Right ventricle myocardium inferior (tissue), 1 donor: ENCODE measurements at regions of chr10 and their contacts with region 1.

Region 1: DNA sequence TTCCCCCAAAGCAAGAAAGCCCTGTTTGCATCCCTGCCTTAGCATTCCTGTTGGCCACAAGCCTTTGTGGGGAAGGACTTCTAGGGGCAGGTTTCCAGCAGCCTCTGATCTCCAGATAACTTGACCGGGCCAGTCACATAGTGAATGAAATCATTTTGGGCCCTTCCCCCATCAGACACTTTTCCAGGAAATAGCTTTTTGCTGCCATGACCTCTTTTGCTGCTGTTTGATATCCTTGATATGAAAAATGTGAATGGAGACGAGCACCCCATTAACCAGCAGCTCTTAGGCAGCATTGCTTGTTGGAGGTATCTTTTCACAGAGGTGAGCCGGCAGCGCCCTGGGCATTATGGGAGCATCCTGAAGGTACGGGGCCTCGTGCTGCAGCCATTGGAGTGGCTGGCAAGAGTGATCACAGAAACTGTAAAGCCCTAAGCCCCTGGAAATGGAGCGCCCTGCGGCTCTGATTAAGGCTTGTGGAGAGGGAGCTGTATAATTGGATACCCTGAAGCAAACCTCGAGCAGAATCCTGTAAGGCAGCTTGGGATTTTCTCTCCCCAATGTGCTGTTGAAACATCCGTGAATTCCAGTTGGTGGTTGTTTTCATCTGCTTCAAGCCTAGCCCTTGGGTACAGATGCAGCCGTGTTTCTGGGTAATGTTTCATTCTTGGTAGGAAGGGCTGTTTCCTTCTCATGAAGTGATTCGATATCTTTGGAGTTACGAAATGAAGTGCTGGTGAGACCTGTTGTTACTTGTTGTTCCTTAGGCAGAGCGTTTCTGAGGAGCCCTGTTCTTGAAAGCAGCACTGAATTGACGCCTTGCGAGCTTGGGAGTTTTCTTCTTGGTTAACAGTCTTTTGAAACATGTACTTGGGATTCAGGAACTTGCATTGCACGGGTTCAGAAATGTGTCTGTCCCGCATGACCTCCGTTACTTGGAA is 179.0 kb downstream of the PTEN start:
- DNase-seq: no peak
- ATAC-seq: peak; percentile 74

Region 2: DNA sequence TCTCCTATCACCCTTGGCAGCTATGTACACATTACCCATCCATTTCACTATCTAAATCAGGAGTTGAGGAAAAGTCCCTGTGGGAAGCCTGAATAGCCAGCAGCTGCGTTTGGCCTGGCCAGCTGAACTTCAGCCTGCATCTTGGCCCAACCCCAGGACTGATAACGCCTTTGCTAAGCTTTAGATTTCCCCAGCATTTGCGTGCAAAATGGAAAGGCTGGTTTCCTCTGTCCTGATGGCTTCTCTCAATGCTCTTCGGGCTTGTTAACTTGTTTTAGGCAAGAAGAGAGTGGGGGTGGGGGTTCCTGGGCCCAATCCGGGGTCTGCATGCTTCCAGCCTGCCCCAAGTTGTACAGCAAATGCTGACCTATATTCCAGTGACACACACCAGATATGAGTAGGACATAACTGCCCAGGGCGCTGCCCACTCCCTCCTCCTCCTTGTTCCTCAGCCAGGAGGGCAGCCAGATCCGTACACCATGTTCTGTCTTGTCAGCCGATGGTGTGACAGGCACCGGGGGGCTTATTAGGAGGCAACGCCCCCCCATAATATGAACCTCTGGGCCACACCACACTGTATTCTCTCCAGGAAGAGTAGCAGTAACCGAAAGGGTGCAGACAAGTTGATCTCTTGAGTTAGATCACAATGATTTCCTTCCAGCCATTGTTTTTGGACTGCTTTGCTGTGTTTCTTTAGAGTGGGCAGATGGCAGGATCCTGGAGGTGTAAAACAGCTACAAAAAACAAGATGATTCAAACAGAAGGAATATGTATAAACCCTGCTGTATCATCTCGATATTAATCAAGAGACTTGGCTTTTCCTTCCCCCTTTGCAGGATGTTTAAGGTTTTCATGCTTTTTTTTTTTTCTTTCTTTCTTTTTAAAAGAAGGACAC is 201.7 kb after region 1 on chr10:
- intact Hi-C with region 1: loop called (anchors 10 kb)
- DNase-seq: peak; percentile 86
- ATAC-seq: peak; percentile 94